ENCODE measurements at regions of chr10 and their contacts with region 1.

Region 1: GRCh38 chr10:100962351-100963080 is 6.8 kb upstream of the SEMA4G start:
- DNase-seq: no peak
- ATAC-seq: no peak
- H3K4me3 ChIP-seq: no peak overlapping the region
- H3K27ac ChIP-seq: no peak overlapping the region
- H3K4me1 ChIP-seq: peaks cover 7% of the 10 kb centered on the region
- H3K27me3 ChIP-seq: no peaks in the 10 kb centered on the region
- CTCF ChIP-seq: no peak
- POLR2A ChIP-seq: no peak

Region 2: DNA sequence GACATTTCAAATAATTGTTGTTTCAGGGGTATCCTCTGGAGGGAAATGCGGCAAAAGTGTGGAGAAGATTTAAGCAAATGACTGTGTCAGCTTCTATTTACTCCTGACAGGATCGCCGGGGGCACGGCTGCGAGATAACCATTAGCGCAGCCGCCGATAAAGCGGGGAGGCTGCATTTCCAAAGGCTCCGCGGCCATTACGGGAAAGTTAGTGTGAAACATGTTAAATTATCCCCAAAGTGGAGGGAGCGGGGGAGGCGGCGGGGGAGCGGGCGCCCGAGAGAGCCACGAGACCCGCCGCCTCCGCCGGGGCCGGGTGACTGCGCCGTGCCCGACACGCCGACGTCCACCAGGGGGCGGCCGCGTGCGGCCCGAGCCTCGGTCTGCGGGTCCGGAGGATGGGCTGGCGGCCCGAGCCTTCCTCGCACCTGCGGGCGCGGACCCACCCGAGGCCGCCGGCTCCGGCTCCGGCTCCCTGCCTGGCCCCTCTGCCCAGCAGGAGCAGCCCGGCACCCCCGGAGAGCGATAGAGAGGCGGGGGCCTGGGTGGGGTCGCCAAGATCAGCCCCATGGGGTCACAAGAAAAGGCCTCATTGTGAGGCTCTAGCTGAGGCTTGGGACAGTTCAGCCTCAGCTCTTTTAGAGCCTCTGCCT is 291.6 kb before region 1 on chr10:
- intact Hi-C with region 1: no loop called
- DNase-seq: peak; percentile 16 to 54 (median 40)
- ATAC-seq: peak; percentile 71
- H3K4me3 ChIP-seq: no peak overlapping the region
- H3K27ac ChIP-seq: no peak overlapping the region
- H3K4me1 ChIP-seq: peaks cover 8% of the 10 kb centered on the region
- H3K27me3 ChIP-seq: peaks cover 0 to 26% of the 10 kb centered on the region in 2 donors
- CTCF ChIP-seq: peak in 5 of 7 experiments; percentile 51 to 74 (median 68)
- POLR2A ChIP-seq: no peak

Region 3: DNA sequence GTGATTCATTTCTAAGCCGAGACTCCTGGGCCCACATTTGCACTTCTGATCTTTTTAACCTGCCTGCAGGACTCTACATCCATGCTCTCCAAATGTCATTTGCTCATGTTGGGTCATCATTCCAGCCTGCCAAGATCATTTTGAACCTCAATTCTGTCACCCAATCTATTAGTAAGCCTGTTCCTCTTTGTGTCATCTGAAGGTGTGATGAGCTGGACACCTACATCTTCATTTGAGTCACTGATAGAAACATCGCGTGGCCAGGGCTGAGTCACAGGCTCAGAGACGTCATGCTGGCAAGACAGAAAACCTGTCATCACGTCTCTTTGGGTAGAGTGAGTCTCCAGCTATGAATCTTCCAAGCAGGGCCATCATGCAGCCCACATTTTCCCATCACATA is 115.1 kb before region 1 on chr10:
- intact Hi-C with region 1: no loop called
- DNase-seq: no peak
- ATAC-seq: no peak
- H3K4me3 ChIP-seq: no peak overlapping the region
- H3K27ac ChIP-seq: no peak overlapping the region
- H3K4me1 ChIP-seq: no peaks in the 10 kb centered on the region
- H3K27me3 ChIP-seq: no peaks in the 10 kb centered on the region
- CTCF ChIP-seq: no peak
- POLR2A ChIP-seq: no peak

Region 4: GRCh38 chr10:100923580-100923979 is 38.9 kb before region 1 on chr10:
- intact Hi-C with region 1: loop called (anchors 5 kb)
- DNase-seq: no peak
- ATAC-seq: no peak
- H3K4me3 ChIP-seq: no peak overlapping the region
- H3K27ac ChIP-seq: no peak overlapping the region
- H3K4me1 ChIP-seq: no peaks in the 10 kb centered on the region
- H3K27me3 ChIP-seq: no peaks in the 10 kb centered on the region
- CTCF ChIP-seq: no peak
- POLR2A ChIP-seq: no peak